ENCODE measurements at regions of chr3 and their contacts with region 1.

Region 1: GRCh38 chr3:189961525-189962161 is 159.1 kb downstream of the P3H2 start:
- DNase-seq: peak; percentile 56
- H3K4me3 ChIP-seq: no peak overlapping the region
- H3K27ac ChIP-seq: no peak overlapping the region
- H3K27me3 ChIP-seq: no peaks in the 10 kb centered on the region
- CTCF ChIP-seq: peak; percentile 91

Region 2: DNA sequence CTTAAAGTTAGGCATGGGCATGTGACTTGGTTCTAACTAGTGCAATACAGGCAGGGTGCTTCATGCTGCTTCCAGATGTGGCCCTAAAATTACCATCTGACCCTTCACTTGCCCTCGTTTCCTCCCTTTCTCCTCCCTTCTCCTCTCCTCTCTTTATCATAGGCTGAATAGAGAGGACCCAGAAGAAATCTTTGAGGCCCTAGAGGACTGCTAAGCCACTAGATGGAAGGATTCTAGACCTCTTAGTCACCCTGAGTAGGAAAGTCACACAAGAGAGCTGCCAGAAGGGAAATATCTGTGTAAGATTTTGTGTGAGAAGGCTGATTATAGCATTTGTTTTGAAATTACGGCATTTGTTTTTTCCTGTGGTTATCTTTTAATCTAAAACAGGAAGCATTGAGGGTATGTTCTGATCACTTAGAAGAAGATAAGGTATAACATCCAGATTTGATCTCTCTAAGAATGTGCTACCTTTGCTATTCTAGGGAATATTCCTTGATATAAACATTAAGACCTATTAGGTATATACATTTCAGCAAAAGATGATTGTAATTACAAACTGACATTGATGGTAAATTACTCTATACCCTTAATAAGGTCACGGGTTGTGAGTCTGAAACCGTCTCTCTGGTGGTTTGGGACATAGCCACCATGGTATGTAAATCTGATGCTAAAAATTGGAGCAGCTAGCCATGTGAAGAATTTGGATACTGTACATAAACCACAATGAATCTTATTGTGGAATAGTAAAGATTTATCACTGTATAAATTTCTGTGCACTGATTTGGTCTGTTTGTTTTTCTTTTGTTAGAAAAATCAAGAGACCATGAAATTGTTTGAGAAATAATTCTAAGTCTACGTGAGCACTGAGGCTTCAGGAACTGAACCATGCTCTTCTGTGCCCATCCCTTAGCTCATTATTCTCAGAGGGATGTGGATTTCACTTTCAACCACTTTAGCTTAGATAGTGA is 246.4 kb before region 1 on chr3:
- CTCF ChIA-PET with region 1: no interaction called
- POLR2A ChIA-PET with region 1: no interaction called
- DNase-seq: no peak
- H3K4me3 ChIP-seq: no peak overlapping the region
- H3K27ac ChIP-seq: no peak overlapping the region
- H3K27me3 ChIP-seq: no peaks in the 10 kb centered on the region
- CTCF ChIP-seq: no peak

Region 3: DNA sequence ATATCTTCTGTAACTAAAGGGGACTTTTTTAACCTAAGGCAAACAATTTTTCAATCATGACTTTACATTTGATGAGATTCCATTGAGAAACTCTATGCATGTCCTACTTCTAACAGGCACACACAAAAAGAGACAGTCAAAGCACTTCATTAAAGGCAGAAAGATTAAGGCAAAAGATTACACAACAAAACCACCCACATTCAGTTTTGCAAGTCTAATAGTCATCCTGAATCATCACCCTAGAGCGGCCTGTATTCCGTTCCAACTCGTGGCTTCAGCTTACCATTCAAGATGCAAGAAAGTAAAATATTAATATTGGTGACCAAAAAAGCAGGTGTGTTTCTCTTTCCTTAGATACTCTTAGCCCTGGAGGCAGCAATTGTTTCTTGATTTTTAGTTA is 46.8 kb before region 1 on chr3:
- CTCF ChIA-PET with region 1: no interaction called
- POLR2A ChIA-PET with region 1: no interaction called
- DNase-seq: peak; percentile 75
- H3K4me3 ChIP-seq: no peak overlapping the region
- H3K27ac ChIP-seq: no peak overlapping the region
- H3K27me3 ChIP-seq: no peaks in the 10 kb centered on the region
- CTCF ChIP-seq: no peak

Region 4: GRCh38 chr3:189974359-189974758 is 12.7 kb after region 1 on chr3:
- CTCF ChIA-PET with region 1: interaction called, 33 read pairs
- POLR2A ChIA-PET with region 1: no interaction called
- DNase-seq: no peak
- H3K4me3 ChIP-seq: no peak overlapping the region
- H3K27ac ChIP-seq: no peak overlapping the region
- H3K27me3 ChIP-seq: no peaks in the 10 kb centered on the region
- CTCF ChIP-seq: no peak

Region 5: DNA sequence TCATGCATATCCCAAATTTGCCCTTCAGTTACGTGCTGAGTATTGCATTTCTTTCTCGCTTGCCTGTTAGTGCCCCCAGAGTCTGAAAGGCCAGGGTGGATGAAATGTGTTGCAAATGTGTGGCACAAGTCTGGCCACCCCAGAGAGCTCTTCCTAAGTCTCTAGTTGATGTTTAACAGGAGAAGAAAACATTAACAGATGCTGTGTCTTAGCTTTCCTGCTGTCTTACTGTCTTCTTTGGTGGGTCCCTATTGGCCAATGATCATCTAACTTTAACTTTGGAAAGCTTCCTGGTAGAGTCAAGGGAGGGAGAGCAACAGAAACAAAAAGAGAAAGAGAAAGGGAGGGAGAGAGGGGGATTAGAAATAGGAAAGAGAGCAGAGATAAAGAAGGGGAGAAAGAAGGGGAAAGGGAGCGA is 235.7 kb after region 1 on chr3:
- CTCF ChIA-PET with region 1: interaction called, 93 read pairs
- POLR2A ChIA-PET with region 1: no interaction called
- DNase-seq: no peak
- H3K4me3 ChIP-seq: no peak overlapping the region
- H3K27ac ChIP-seq: no peak overlapping the region
- H3K27me3 ChIP-seq: no peaks in the 10 kb centered on the region
- CTCF ChIP-seq: no peak

Region 6: GRCh38 chr3:190345027-190345821 is 383.6 kb after region 1 on chr3:
- CTCF ChIA-PET with region 1: interaction called, 12 read pairs
- POLR2A ChIA-PET with region 1: no interaction called
- DNase-seq: peak; percentile 85
- H3K4me3 ChIP-seq: peak overlapping the region; percentile 38
- H3K27ac ChIP-seq: peak overlapping the region; percentile 94
- H3K27me3 ChIP-seq: no peaks in the 10 kb centered on the region
- CTCF ChIP-seq: no peak

Region 7: GRCh38 chr3:190424478-190425439 is 463.1 kb after region 1 on chr3:
- CTCF ChIA-PET with region 1: interaction called, 82 read pairs
- POLR2A ChIA-PET with region 1: no interaction called
- DNase-seq: peak; percentile 37
- H3K4me3 ChIP-seq: no peak overlapping the region
- H3K27ac ChIP-seq: no peak overlapping the region
- H3K27me3 ChIP-seq: no peaks in the 10 kb centered on the region
- CTCF ChIP-seq: peak; percentile 75

Measured in AG04450 (cell line).